A673 (cell line): ENCODE measurements at regions of chr10 and their contacts with region 1.

Region 1: DNA sequence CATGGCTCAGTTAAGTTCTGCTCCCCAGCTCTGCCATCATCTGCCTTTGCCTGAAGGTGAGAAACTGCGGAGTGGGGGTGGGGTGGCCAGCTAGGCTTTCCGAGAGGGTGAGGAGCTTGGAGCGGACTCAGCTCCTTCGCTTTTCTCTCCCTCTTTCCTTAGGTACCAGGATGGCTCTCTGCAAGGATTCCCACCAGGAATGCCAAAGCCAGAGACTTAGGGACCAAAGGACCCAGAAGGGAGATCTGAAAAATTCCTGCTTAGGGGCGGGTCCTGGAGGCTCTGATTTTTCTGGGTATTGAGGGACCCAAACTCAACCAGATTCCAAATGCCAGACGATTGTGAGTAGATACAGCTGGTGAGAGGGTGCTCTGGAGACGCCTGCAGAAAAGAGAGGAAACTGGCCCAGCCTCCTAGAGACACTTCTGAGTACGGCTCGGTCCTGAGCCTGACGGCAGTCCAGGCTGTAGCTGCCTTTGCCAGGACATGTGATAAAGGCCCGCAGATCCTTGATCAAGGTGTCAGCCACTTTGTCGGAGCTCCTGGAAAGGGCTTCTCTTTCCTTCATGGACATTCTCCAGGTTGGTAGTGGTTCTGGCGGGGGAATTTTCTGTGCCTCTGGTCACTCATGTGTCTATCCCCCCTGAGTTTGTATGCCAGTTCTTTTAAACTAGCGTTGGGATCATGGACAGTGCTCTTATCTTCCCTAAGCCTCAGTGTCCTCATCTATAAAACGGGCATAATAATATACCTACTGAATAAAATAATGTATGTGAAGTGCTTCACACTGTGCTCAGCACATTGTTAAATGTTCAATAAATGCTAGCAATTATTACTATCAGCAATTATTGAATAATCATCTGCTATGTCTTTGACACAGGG is 42.5 kb upstream of the BTRC start:
- DNase-seq: no peak
- H3K4me3 ChIP-seq: no peak overlapping the region
- H3K27ac ChIP-seq: no peak overlapping the region
- H3K4me1 ChIP-seq: no peaks in the 10 kb centered on the region
- H3K27me3 ChIP-seq: no peaks in the 10 kb centered on the region
- CTCF ChIP-seq: no peak

Region 2: DNA sequence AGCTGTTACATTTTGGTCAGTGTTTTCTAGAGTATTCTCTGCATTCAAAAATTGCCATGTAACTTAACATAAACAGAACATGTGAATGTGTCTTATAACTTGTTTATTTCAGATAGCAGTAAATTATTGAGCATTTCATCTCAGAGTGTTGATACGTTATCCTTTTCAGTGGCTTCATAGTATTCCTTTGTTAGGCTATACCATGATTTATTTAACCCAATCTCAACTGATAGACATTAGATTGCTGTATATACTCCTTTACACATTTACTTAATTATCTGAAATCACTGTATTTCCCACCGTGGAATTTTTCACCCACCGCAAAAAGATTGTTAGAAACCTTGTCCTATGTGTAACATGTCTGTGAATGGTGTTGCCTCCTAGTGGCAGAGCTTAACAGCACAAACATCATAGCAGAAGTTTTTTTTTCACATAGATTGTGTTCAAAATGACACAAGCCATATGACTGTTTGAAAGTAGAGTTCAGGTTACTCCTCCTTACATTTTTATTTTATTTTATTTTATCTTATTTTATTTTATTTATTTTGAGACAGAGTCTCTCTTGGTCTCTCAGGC is 377.3 kb before region 1 on chr10:
- CTCF ChIA-PET with region 1: no interaction called
- POLR2A ChIA-PET with region 1: no interaction called
- intact Hi-C with region 1: no loop called
- DNase-seq: peak; percentile 40
- H3K4me3 ChIP-seq: no peak overlapping the region
- H3K27ac ChIP-seq: no peak overlapping the region
- H3K4me1 ChIP-seq: no peaks in the 10 kb centered on the region
- H3K27me3 ChIP-seq: no peaks in the 10 kb centered on the region
- CTCF ChIP-seq: peak; percentile 64

Region 3: DNA sequence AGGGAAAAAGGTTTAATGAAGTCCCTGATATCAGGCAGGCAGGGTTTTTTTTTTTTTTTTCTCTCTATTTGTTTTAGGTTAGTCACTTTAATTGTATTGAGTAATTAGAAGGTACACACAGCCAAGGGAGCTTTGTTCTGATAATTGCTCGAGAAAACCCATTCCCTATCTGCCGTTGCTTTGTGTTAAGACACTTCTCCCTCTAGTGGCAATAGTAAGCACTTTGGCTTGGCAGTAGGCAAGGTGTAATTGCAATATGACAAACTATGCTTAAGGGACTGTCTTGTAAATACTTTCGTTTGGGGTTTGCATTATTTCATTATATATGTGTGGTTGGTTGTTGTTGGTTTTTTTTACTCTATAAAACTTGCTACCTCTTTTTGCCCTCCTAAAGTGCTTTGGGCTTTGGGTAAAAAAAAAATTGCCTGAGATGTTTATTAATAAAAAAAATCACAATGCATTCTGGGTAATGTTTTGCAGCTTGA is 155.9 kb after region 1 on chr10:
- CTCF ChIA-PET with region 1: interaction called, 11 read pairs
- POLR2A ChIA-PET with region 1: no interaction called
- intact Hi-C with region 1: no loop called
- DNase-seq: peak; percentile 79
- H3K4me3 ChIP-seq: no peak overlapping the region
- H3K27ac ChIP-seq: no peak overlapping the region
- H3K4me1 ChIP-seq: no peaks in the 10 kb centered on the region
- H3K27me3 ChIP-seq: no peaks in the 10 kb centered on the region
- CTCF ChIP-seq: peak; percentile 91

Region 4: DNA sequence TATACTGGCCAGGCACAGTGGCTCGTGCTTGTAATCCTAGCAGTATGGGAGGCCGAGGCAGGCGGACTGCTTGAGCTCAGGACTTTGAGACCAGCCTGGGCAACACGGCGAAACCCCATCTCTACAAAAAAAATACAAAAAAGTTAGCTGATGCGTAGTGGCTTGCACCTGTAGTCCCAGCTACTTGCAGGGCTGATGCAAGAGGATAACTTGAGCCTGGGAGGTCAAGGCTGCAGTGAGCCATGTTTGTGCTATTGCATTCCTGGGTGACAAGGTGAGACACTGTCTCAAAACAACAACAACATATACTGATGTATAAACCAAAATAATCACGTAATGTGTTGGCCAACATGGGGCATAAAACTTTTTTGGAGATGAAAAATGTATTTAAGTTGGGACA is 478.3 kb after region 1 on chr10:
- CTCF ChIA-PET with region 1: no interaction called
- POLR2A ChIA-PET with region 1: interaction called, 19 read pairs
- intact Hi-C with region 1: no loop called
- DNase-seq: no peak
- H3K4me3 ChIP-seq: no peak overlapping the region
- H3K27ac ChIP-seq: no peak overlapping the region
- H3K4me1 ChIP-seq: no peaks in the 10 kb centered on the region
- H3K27me3 ChIP-seq: no peaks in the 10 kb centered on the region
- CTCF ChIP-seq: no peak